ENCODE measurements at regions of chr11 and their contacts with region 1.

Region 1: GRCh38 chr11:32052218-32052617 is 38.7 kb upstream of the RCN1 start:
- DNase-seq: peak; percentile 43
- H3K4me3 ChIP-seq: 0 out of 4 replicates have a peak overlapping the region, but pooled peaks of 1 of the 2 experiments have one; percentile 19
- H3K27ac ChIP-seq: no peak overlapping the region
- H3K4me1 ChIP-seq: no peaks in the 10 kb centered on the region; a peak in 1 of 4 replicates
- H3K27me3 ChIP-seq: peaks cover 63% of the 10 kb centered on the region
- CTCF ChIP-seq: peak; percentile 79
- EP300 ChIP-seq: no peak
- RAD21 ChIP-seq: peak; percentile 71

Region 2: DNA sequence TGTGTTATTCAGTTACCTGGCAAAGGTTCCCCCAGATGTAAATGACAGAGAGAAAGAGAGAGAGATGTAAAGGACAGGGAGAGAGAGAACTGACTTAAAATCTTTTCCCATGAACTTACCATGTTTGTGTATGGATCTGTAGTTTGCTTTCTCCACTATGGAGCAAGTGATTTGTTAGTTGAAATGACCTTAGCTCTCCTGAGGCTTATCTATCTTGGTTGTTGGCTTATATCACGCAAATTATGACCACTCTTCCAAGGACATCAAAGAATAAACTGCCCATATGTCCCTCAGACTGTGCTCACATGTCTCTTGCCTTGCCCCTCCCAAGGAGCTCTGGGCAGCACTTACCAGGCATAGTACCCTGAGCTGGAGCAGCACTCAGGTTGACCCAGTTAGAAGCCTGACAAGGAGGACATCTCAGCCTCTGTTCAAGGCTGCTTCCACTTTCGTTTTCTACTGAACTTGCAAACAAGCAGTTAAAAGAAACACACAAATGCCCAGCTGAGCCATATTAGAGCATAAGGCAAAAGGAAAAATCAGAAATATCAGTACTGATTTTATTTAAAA is 56.6 kb before region 1 on chr11:
- CTCF ChIA-PET with region 1: no interaction called
- POLR2A ChIA-PET with region 1: no interaction called
- DNase-seq: no peak
- H3K4me3 ChIP-seq: peak overlapping the region; percentile 17 to 59
- H3K27ac ChIP-seq: no peak overlapping the region
- H3K4me1 ChIP-seq: no peaks in the 10 kb centered on the region; a peak in 1 of 4 replicates
- H3K27me3 ChIP-seq: peaks cover 13% of the 10 kb centered on the region; the same call in 1 of the 2 replicates
- CTCF ChIP-seq: no peak
- EP300 ChIP-seq: no peak
- RAD21 ChIP-seq: no peak

Region 3: DNA sequence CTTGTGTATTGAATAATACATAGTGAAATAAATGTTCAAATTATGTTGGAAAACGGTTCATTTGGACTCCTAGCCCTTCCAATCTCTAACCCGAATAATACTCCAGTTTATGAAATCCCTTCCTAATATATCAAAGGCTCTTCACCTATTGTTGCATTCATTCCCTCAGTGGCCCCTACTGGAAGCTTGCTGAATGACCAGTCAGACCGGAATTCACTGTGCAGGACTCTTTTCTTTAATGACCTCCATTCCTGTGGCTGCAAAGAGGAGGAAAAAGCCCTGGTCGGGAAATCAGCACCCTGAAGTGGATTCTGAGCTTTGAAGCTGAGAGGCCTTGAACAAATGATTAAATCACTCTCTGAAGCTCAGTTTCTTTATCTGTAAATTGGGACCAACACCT is 19.6 kb after region 1 on chr11:
- CTCF ChIA-PET with region 1: interaction called, 14 read pairs
- POLR2A ChIA-PET with region 1: no interaction called
- DNase-seq: peak; percentile 23
- H3K4me3 ChIP-seq: no peak overlapping the region
- H3K27ac ChIP-seq: no peak overlapping the region
- H3K4me1 ChIP-seq: peaks cover 0 to 4% of the 10 kb centered on the region in 2 experiments; a peak in 2 of 4 replicates
- H3K27me3 ChIP-seq: peaks cover 43% of the 10 kb centered on the region
- CTCF ChIP-seq: peak; percentile 54
- EP300 ChIP-seq: no peak
- RAD21 ChIP-seq: peak; percentile 19; the same call in 1 of the 2 replicates

Region 4: GRCh38 chr11:32090545-32091373 is 38.5 kb after region 1 on chr11 and contains the start of gene RCN1:
- CTCF ChIA-PET with region 1: interaction called, 13 read pairs
- POLR2A ChIA-PET with region 1: no interaction called
- DNase-seq: peak; percentile 93
- H3K4me3 ChIP-seq: peak within 1 kb of the TSS; percentile 78 to 85
- H3K27ac ChIP-seq: peak within 1 kb of the TSS; percentile 73 to 83
- H3K4me1 ChIP-seq: peaks cover 9 to 39% of the 10 kb centered on the region in 2 experiments; a peak in 2 of 4 replicates
- H3K27me3 ChIP-seq: no peaks in the 10 kb centered on the region
- CTCF ChIP-seq: no peak
- EP300 ChIP-seq: no peak
- RAD21 ChIP-seq: no peak
- polyA plus RNA-seq, gene RCN1: 62.6 and 63.3 TPM in 2 replicates

Region 5: GRCh38 chr11:32148881-32149389 is 96.7 kb after region 1 on chr11:
- CTCF ChIA-PET with region 1: interaction called, 10 read pairs
- POLR2A ChIA-PET with region 1: no interaction called
- DNase-seq: no peak
- H3K4me3 ChIP-seq: no peak overlapping the region
- H3K27ac ChIP-seq: no peak overlapping the region
- H3K4me1 ChIP-seq: no peaks in the 10 kb centered on the region
- H3K27me3 ChIP-seq: no peaks in the 10 kb centered on the region
- CTCF ChIP-seq: no peak
- EP300 ChIP-seq: no peak
- RAD21 ChIP-seq: no peak

Region 6: DNA sequence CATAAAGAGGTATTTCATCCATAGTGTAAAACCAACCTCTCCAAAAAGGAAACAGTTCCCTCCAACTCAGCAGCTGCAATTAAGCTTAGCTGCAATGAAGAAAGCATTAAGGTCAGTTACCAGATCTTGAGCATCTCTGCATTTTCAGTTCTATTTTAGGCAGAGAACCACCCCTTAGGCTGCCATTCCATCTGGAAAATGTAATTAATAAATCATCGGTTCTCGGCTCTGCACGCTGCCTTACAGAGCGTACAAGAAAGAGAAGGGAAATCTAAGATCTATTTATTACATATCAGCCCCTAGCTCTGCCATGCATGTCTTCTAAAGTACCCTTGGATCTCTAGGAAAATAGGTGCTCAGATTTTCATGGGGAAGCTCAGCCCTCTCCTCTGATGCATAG is 110.1 kb after region 1 on chr11:
- CTCF ChIA-PET with region 1: interaction called, 13 read pairs
- POLR2A ChIA-PET with region 1: no interaction called
- DNase-seq: no peak
- H3K4me3 ChIP-seq: no peak overlapping the region
- H3K27ac ChIP-seq: no peak overlapping the region
- H3K4me1 ChIP-seq: no peaks in the 10 kb centered on the region
- H3K27me3 ChIP-seq: peaks cover 37% of the 10 kb centered on the region
- CTCF ChIP-seq: no peak
- EP300 ChIP-seq: no peak
- RAD21 ChIP-seq: no peak